Dendritic cell treated with granulocyte-macrophage colony-stimulating factor and Interleukin-4, amounts not matched to agents 40 ng/mL and 50 ng/mL, for 4 days (primary cell): ENCODE measurements at regions of chr20 and their contacts with region 1.

Region 1: GRCh38 chr20:16229813-16230212 is 343.4 kb downstream of the KIF16B start:
- H3K4me3 Mint-ChIP-seq: no peak overlapping the region
- H3K27ac Mint-ChIP-seq: no peak overlapping the region
- H3K4me1 Mint-ChIP-seq: no peaks in the 10 kb centered on the region
- H3K27me3 Mint-ChIP-seq: no peaks in the 10 kb centered on the region

Region 2: DNA sequence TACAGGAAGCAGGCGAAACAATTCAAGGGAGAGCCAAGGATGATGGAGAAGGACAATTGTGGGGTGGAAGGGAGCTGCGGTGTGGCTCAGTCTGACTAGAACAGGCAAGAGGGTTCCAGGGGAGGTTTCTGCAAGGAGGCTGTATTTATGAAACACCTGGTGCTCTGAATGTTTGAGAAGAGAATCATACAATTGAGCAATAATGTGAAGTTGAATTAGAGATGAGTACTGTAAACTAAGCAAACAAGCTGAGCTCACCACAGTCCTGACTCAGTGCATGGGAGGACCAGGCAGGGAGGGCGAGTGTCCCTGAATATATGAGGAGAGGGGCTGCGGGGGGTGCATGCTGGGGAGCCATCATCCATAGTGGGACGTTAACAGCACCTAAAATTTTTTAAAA is 63.8 kb after region 1 on chr20:
- intact Hi-C with region 1: loop called (anchors 5 kb)
- H3K4me3 Mint-ChIP-seq: no peak overlapping the region
- H3K27ac Mint-ChIP-seq: no peak overlapping the region
- H3K4me1 Mint-ChIP-seq: no peaks in the 10 kb centered on the region
- H3K27me3 Mint-ChIP-seq: no peaks in the 10 kb centered on the region

Region 3: GRCh38 chr20:16517946-16518783 is 288.4 kb after region 1 on chr20:
- intact Hi-C with region 1: no loop called
- H3K4me3 Mint-ChIP-seq: no peak overlapping the region
- H3K27ac Mint-ChIP-seq: no peak overlapping the region
- H3K4me1 Mint-ChIP-seq: peaks cover 39% of the 10 kb centered on the region
- H3K27me3 Mint-ChIP-seq: no peaks in the 10 kb centered on the region